Activated B cell treated with CpG ODN at 0.5 μM for 24 hours (primary cell): ENCODE measurements at regions of chr10 and their contacts with region 1.

Region 1: GRCh38 chr10:110354322-110354766 is 49.6 kb upstream of the SMNDC1 start:
- DNase-seq: peak; percentile 60
- ATAC-seq: peak; percentile 5
- H3K4me3 Mint-ChIP-seq: peak overlapping the region; percentile 33
- H3K27ac Mint-ChIP-seq: peak overlapping the region; percentile 99
- H3K4me1 Mint-ChIP-seq: peaks cover 72% of the 10 kb centered on the region
- H3K27me3 Mint-ChIP-seq: no peaks in the 10 kb centered on the region
- CTCF ChIP-seq: no peak

Region 2: GRCh38 chr10:110007701-110008517 is 346.4 kb before region 1 on chr10 and contains the start of gene ADD3:
- CTCF ChIA-PET with region 1: no interaction called
- POLR2A ChIA-PET with region 1: no interaction called
- intact Hi-C with region 1: loop called (anchors 5 kb)
- DNase-seq: peak; percentile 94
- ATAC-seq: peak; percentile 85
- H3K4me3 Mint-ChIP-seq: no peak within 1 kb of the TSS
- H3K27ac Mint-ChIP-seq: no peak within 1 kb of the TSS
- H3K4me1 Mint-ChIP-seq: peaks cover 54% of the 10 kb centered on the region
- H3K27me3 Mint-ChIP-seq: no peaks in the 10 kb centered on the region
- CTCF ChIP-seq: no peak
- total RNA-seq, gene ADD3: 85.8 and 95.3 TPM in 2 replicates

Region 3: DNA sequence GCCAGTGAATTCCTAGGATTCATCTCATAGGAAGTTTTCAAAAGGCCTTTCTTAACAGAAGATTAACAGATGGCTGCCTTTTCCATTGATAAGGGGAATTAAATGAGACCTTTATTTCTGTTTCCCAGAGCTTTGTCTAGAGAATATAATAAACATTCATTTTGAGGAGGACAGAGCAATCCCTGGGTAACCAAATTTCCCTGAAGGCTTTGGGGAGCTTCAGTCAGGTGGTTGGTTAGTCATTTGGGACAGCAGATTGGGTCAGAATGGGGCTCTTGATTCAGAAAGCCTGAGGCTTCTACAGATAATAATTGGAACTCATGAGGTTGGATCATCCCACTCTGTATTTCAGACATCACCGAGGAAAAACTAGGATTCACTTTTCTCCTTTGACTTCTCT is 125.2 kb before region 1 on chr10:
- CTCF ChIA-PET with region 1: no interaction called
- POLR2A ChIA-PET with region 1: no interaction called
- intact Hi-C with region 1: no loop called
- DNase-seq: no peak
- ATAC-seq: no peak
- H3K4me3 Mint-ChIP-seq: no peak overlapping the region
- H3K27ac Mint-ChIP-seq: no peak overlapping the region
- H3K4me1 Mint-ChIP-seq: peaks cover 16% of the 10 kb centered on the region
- H3K27me3 Mint-ChIP-seq: no peaks in the 10 kb centered on the region
- CTCF ChIP-seq: no peak

Region 4: GRCh38 chr10:110311357-110311949 is 42.9 kb before region 1 on chr10:
- CTCF ChIA-PET with region 1: interaction called, 32 read pairs
- POLR2A ChIA-PET with region 1: interaction called, 43 read pairs
- intact Hi-C with region 1: loop called (anchors 1 kb)
- DNase-seq: no peak
- ATAC-seq: peak; percentile 83
- H3K4me3 Mint-ChIP-seq: no peak overlapping the region
- H3K27ac Mint-ChIP-seq: peak overlapping the region; percentile 13
- H3K4me1 Mint-ChIP-seq: peaks cover 19% of the 10 kb centered on the region
- H3K27me3 Mint-ChIP-seq: no peaks in the 10 kb centered on the region
- CTCF ChIP-seq: no peak

Region 5: GRCh38 chr10:110373857-110374654 is 19.7 kb after region 1 on chr10:
- CTCF ChIA-PET with region 1: interaction called, 18 read pairs
- POLR2A ChIA-PET with region 1: interaction called, 10 read pairs
- intact Hi-C with region 1: loop called (anchors 2 kb)
- DNase-seq: no peak
- ATAC-seq: peak; percentile 42
- H3K4me3 Mint-ChIP-seq: no peak overlapping the region
- H3K27ac Mint-ChIP-seq: peak overlapping the region; percentile 16
- H3K4me1 Mint-ChIP-seq: peaks cover 20% of the 10 kb centered on the region
- H3K27me3 Mint-ChIP-seq: peaks cover 3% of the 10 kb centered on the region
- CTCF ChIP-seq: no peak

Region 6: DNA sequence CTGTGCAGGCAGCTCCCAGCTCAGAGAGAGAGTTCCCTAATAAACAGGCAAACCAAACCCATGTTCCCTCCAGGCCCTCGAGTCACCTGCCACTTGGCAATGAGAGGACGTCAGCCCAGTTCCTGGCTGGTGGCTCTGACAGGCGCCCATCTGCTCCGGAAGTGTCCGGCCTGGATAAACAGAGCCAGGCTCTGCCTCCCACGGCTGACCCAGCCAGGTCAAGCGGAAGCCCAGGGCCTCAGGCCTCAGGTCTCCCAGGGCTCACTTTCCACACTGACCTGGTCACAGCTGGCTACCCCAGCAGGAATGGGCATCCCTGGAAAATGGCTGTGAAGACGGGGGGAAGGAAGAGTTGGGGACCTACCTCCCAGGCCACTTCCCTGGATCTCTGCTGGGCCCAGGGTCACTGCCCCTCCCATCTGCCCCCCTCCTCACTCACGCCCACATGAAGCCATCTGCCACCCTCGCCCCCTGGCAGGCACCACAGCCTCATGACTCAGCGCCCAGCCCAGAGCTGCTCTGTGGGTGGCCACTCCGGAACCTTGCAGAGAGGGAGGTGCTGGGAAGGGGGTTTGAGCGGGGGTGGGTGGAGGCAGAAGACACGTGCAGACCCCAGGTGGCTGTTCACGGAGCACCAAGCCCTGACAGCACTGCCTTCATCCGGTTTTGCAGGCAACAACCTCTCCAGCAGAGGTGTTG is 105.9 kb after region 1 on chr10:
- CTCF ChIA-PET with region 1: interaction called, 20 read pairs
- POLR2A ChIA-PET with region 1: interaction called, 67 read pairs
- intact Hi-C with region 1: loop called (anchors 1 kb)
- DNase-seq: peak; percentile 40
- ATAC-seq: peak; percentile 68
- H3K4me3 Mint-ChIP-seq: peak overlapping the region; percentile 38
- H3K27ac Mint-ChIP-seq: peak overlapping the region; percentile 71
- H3K4me1 Mint-ChIP-seq: peaks cover 75% of the 10 kb centered on the region
- H3K27me3 Mint-ChIP-seq: no peaks in the 10 kb centered on the region
- CTCF ChIP-seq: no peak

Region 7: DNA sequence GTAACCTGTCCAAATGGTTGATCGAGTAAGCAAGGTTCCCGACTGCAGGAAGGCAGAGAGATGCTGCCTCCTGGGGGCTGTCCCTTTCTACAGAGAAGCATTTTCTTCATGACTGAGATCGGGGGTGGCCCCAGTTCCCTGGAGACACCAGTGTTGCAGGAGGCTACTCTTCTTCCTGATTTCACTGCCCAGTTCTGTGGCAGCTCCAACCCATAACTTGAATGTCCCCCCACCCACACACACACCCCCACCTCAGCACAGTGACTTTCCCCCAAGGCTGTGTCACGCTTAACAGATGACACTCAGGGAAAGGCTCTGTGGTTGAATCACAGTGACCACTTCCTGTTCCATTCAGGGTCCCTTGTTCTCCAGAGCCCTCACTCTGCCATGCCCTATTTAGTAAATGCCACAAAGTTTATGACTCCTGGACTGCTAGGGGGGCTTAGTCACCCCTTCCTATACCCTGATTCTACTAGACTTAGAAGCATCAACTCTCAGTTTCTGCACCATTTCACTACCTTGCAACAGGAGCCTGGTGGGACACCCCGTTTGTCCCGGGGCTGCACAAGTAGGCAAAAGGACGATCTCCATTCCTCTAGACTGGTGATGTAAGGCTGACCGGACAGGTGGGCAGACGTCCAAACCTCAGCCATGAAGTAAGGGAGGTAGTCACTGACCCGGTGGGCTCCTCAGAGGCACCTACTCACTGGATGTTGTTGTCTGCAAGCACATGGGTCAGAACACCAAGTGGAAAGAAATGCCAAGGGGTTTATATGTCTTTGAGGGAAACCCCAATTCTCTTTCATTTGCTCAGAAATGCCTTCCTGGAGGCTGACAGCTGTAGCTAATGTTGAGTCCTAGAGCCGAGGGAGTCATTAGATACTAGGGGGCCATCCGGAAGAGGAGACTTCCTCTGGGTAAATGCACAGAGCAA is 181.9 kb after region 1 on chr10:
- CTCF ChIA-PET with region 1: interaction called, 8 read pairs
- POLR2A ChIA-PET with region 1: interaction called, 17 read pairs
- intact Hi-C with region 1: loop called (anchors 1 kb)
- DNase-seq: peak; percentile 49
- ATAC-seq: peak; percentile 83
- H3K4me3 Mint-ChIP-seq: peak overlapping the region; percentile 62
- H3K27ac Mint-ChIP-seq: peak overlapping the region; percentile 68
- H3K4me1 Mint-ChIP-seq: peaks cover 31% of the 10 kb centered on the region
- H3K27me3 Mint-ChIP-seq: peaks cover 4% of the 10 kb centered on the region
- CTCF ChIP-seq: no peak

Region 8: GRCh38 chr10:110918643-110919363 is 564.5 kb after region 1 on chr10 and contains the start of gene BBIP1:
- CTCF ChIA-PET with region 1: no interaction called
- POLR2A ChIA-PET with region 1: no interaction called
- intact Hi-C with region 1: loop called (anchors 1 kb)
- DNase-seq: peak; percentile 89
- ATAC-seq: peak; percentile 84
- H3K4me3 Mint-ChIP-seq: peak within 1 kb of the TSS; percentile 99
- H3K27ac Mint-ChIP-seq: peak within 1 kb of the TSS; percentile 99
- H3K4me1 Mint-ChIP-seq: peaks cover 51% of the 10 kb centered on the region
- H3K27me3 Mint-ChIP-seq: no peaks in the 10 kb centered on the region
- CTCF ChIP-seq: no peak
- total RNA-seq, gene BBIP1: 28.4 and 29.0 TPM in 2 replicates